A673 (cell line): ENCODE measurements at regions of chr12 and their contacts with region 1.

Region 1: GRCh38 chr12:121793838-121794533 is 498 bp upstream of the RHOF start:
- DNase-seq: peak; percentile 94
- H3K4me3 ChIP-seq: peak overlapping the region; percentile 58
- H3K27ac ChIP-seq: peak overlapping the region; percentile 83
- H3K4me1 ChIP-seq: peaks cover 32% of the 10 kb centered on the region
- H3K27me3 ChIP-seq: no peaks in the 10 kb centered on the region
- CTCF ChIP-seq: peak; percentile 100

Region 2: DNA sequence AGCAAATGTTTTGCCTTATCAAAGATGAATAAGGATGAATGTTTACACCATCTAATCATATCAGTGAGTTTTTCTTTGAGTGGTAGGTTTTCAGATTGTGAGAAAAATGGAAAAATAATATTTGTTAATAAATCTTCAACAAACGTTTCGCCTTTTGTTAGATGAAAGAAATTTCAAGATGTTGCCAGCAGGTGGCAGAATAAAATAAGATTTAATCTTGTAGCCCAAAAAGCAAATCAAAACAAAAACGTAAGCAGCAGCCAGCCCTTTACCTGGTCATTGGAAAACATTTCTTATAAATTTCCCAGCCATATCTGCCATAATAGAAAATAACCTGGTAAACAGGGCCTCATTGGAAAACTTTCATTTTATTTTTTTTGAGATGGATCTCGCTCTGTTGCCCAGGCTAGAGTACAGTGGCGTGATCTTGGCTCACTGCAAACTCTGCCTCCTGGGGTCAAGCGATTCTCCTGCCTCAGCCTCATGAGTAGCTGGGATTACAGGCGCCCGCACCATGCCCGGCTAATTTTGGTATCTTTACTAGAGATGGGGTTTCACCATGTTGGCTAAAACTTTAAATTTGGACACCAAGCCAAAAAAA is 96.8 kb before region 1 on chr12:
- CTCF ChIA-PET with region 1: interaction called, 4 read pairs
- POLR2A ChIA-PET with region 1: no interaction called
- intact Hi-C with region 1: loop called (anchors 5 kb)
- DNase-seq: peak; percentile 72
- H3K4me3 ChIP-seq: no peak overlapping the region
- H3K27ac ChIP-seq: no peak overlapping the region
- H3K4me1 ChIP-seq: no peaks in the 10 kb centered on the region
- H3K27me3 ChIP-seq: no peaks in the 10 kb centered on the region
- CTCF ChIP-seq: peak; percentile 66

Region 3: DNA sequence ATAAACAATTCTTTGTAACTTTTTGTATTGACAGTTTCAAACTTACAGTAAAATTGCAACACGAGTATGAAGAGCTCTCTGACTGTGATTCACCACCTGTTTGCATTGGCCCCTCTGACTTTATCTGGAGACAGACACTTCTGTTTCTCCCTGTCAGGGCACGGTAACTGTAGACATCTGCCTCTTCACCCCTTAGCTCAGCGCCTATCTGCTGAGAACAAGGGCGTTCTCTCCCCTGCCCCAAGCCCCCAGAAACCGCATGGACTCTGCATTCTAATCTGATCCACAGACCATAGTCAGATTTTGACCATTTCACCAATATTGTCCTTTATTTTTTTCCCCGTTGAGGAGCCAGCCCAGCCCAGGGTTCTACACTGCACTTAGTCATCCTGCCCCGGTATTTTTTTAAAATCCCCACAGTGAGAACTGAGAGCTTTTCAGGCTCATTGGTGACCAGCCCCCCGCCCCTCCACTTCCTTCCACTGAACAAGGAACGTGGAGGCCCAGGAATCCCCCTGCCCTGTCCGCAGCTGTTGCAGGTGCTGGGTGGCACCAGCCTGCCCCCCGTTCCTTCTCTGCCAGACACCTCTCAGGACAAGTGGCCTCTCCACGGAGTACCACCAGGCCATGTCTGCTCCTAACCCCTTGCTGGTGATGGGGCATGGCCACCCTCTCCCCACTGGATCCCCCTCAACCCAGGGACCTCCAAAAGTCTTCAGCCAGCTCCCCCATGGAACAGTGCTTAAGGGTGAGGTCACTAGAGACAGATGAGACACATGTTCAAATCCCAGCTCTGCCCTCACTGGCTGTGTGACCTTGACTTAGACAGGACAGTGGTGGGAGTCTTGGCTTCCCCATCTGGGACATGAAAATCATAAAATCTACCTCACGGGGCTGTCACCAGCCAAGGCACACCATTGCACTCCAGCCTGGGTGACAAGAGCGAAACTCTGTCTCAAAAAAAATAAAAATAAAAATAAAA is 11.7 kb before region 1 on chr12:
- CTCF ChIA-PET with region 1: interaction called, 17 read pairs
- POLR2A ChIA-PET with region 1: interaction called, 5 read pairs
- intact Hi-C with region 1: no loop called
- DNase-seq: no peak
- H3K4me3 ChIP-seq: peak overlapping the region; percentile 10
- H3K27ac ChIP-seq: peak overlapping the region; percentile 72
- H3K4me1 ChIP-seq: peaks cover 15% of the 10 kb centered on the region
- H3K27me3 ChIP-seq: no peaks in the 10 kb centered on the region
- CTCF ChIP-seq: no peak

Region 4: GRCh38 chr12:121811434-121812319 is 17.7 kb after region 1 on chr12:
- CTCF ChIA-PET with region 1: interaction called, 82 read pairs
- POLR2A ChIA-PET with region 1: interaction called, 3 read pairs
- intact Hi-C with region 1: loop called (anchors 1 kb)
- DNase-seq: peak; percentile 73
- H3K4me3 ChIP-seq: peak overlapping the region; percentile 38
- H3K27ac ChIP-seq: peak overlapping the region; percentile 47
- H3K4me1 ChIP-seq: peaks cover 23% of the 10 kb centered on the region
- H3K27me3 ChIP-seq: no peaks in the 10 kb centered on the region
- CTCF ChIP-seq: peak; percentile 83

Region 5: GRCh38 chr12:121883315-121883660 is 89.3 kb after region 1 on chr12:
- CTCF ChIA-PET with region 1: interaction called, 10 read pairs
- POLR2A ChIA-PET with region 1: interaction called, 15 read pairs
- intact Hi-C with region 1: loop called (anchors 2 kb)
- DNase-seq: no peak
- H3K4me3 ChIP-seq: no peak overlapping the region
- H3K27ac ChIP-seq: no peak overlapping the region
- H3K4me1 ChIP-seq: peaks cover 7% of the 10 kb centered on the region
- H3K27me3 ChIP-seq: no peaks in the 10 kb centered on the region
- CTCF ChIP-seq: no peak